Endothelial cell of umbilical vein (primary cell): ENCODE measurements at regions of chr21 and their contacts with region 1.

Region 1: DNA sequence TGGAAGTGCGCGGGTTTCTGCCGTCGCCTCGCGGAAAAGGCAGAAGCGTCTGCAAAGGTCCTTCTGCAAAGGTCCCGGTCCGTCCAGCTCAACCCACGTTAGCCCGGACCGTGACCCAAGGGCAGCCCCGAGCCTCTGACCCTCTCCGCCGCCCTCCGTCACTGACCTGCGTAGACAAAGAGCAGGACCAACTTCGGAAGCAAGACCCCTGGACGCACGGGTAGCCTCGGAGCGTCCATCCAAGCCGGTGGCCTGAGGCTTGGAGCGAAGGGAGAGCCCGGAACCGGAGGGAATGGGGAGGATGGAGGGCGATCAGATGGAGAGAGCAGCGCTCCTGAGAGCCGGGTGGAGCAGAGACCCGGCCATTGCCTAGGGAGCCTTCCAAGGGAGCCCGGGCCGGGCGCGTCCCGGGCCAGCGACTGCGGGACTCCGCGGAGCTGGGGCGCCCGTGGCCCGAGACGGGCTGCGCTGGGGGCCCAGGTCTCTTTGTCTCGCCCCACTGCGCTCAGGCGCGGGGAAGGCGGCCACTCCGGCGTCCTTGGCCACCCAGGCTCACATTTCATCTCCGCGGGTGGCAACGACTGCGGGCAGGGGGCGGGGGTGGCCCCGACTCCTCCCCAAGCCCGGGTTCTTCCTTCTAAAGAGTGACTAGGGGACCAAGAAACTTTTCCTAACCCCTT is at the start of gene CYYR1:
- DNase-seq: peak; percentile 62
- H3K4me3 ChIP-seq: peak within 1 kb of the TSS; percentile 72 to 83 (median 74)
- H3K27ac ChIP-seq: peak within 1 kb of the TSS; percentile 42
- H3K4me1 ChIP-seq: peaks cover 29% of the 10 kb centered on the region
- H3K27me3 ChIP-seq: no peaks in the 10 kb centered on the region
- CTCF ChIP-seq: no peak
- POLR2A ChIP-seq: no peak
- total RNA-seq, gene CYYR1: 23.8 and 25.7 TPM in 2 replicates

Region 2: DNA sequence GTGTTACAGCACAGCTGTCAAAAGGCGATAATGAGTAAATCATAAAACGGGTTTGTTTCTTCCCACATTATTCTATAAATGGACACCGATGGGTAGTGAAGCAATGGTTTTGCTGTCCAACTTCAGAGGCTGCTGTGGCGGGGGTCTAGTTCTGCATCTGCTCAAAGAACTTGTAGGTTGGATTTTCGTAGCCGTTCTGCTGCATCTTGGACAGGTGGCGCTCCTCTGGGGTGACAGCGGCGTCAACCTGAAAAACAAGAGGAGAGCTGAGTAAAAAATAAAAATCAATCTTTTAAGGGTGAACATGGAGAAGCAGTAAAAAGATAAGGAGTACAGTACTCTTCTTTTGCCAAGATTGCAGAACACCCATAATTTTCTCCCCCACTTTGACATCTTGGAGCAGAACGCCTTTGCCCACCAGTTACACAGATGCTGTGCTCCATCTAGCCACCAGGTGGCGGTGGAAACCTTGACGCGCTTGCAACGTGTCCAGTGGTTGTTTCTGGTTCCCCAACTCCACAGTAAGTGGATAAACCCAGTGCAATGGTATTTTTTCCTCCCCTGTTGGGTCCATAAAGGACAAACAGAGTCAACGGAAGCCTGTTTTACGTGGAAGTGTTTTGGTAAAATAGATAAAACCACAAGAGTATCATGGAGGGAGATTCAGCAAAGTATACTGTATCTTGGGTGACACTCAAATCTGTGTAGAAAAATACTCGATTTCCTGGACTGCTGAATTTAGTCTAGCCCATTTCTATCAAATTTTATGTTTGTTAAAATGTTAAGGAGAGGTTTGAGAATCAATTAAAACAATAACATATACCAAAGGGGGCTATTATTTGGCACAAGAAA is 691.1 kb before region 1 on chr21:
- CTCF ChIA-PET with region 1: no interaction called
- POLR2A ChIA-PET with region 1: no interaction called
- dilution Hi-C with region 1: no loop called
- intact Hi-C with region 1: loop called (anchors 5 kb)
- DNase-seq: peak; percentile 65
- H3K4me3 ChIP-seq: no peak overlapping the region
- H3K27ac ChIP-seq: no peak overlapping the region
- H3K4me1 ChIP-seq: peaks cover 23% of the 10 kb centered on the region
- H3K27me3 ChIP-seq: no peaks in the 10 kb centered on the region
- CTCF ChIP-seq: peak; percentile 87 to 89
- POLR2A ChIP-seq: no peak

Region 3: GRCh38 chr21:26546446-26547097 is 26.3 kb before region 1 on chr21:
- CTCF ChIA-PET with region 1: interaction called, 3 read pairs
- POLR2A ChIA-PET with region 1: interaction called, 3 read pairs
- dilution Hi-C with region 1: no loop called
- intact Hi-C with region 1: loop called (anchors 1 kb)
- DNase-seq: peak; percentile 83
- H3K4me3 ChIP-seq: peak overlapping the region in 1 of 3 experiments; percentile 15
- H3K27ac ChIP-seq: peak overlapping the region; percentile 63
- H3K4me1 ChIP-seq: peaks cover 16% of the 10 kb centered on the region
- H3K27me3 ChIP-seq: no peaks in the 10 kb centered on the region
- CTCF ChIP-seq: no peak
- POLR2A ChIP-seq: no peak

Region 4: DNA sequence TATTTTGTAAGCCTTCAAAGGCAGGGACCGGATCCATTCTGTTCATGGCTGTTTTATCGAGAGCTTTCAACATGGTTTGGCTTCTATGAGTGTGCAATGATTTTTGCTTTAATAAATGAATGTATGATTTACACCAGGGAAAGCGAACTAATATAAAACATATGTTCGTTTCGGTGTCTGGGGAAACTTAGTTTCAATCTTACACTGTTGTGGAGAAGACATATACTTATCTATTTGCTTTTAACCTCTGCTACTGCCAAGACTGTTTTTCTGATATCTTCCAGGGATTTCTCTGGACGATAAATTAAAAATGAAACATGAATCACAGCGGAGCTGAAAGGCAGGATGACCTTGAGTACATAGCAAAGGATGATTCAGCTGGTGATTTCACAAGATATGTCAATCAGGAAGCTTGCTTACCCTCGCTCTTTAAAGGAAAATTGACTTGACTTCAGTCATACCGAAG is 14.9 kb after region 1 on chr21:
- CTCF ChIA-PET with region 1: interaction called, 12 read pairs
- POLR2A ChIA-PET with region 1: no interaction called
- dilution Hi-C with region 1: no loop called
- intact Hi-C with region 1: no loop called
- DNase-seq: peak; percentile 86
- H3K4me3 ChIP-seq: no peak overlapping the region
- H3K27ac ChIP-seq: no peak overlapping the region
- H3K4me1 ChIP-seq: peaks cover 12% of the 10 kb centered on the region
- H3K27me3 ChIP-seq: no peaks in the 10 kb centered on the region
- CTCF ChIP-seq: no peak
- POLR2A ChIP-seq: no peak

Region 5: DNA sequence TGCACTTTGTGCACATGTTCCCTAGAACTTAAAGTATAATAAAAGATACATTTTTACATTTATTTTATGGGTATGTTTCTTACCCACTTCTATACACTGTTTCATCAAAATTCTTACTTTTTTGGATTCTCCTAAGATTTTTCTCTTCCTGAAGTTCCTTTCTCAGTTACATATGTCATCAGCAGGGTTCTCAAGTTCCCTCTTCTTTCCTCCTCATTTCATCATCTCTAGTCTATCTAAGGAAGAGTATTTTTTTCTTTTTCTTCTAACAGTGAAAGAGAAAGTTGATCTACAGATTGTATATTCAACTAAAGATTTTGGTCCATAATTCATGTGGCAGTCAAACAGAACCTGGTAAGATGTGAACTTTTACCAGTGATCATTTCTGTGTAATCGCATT is 41.4 kb after region 1 on chr21:
- CTCF ChIA-PET with region 1: no interaction called
- POLR2A ChIA-PET with region 1: no interaction called
- dilution Hi-C with region 1: no loop called
- intact Hi-C with region 1: no loop called
- DNase-seq: no peak
- H3K4me3 ChIP-seq: no peak overlapping the region
- H3K27ac ChIP-seq: no peak overlapping the region
- H3K4me1 ChIP-seq: no peaks in the 10 kb centered on the region
- H3K27me3 ChIP-seq: peaks cover 0 to 2% of the 10 kb centered on the region in 2 experiments
- CTCF ChIP-seq: no peak
- POLR2A ChIP-seq: no peak

Region 6: DNA sequence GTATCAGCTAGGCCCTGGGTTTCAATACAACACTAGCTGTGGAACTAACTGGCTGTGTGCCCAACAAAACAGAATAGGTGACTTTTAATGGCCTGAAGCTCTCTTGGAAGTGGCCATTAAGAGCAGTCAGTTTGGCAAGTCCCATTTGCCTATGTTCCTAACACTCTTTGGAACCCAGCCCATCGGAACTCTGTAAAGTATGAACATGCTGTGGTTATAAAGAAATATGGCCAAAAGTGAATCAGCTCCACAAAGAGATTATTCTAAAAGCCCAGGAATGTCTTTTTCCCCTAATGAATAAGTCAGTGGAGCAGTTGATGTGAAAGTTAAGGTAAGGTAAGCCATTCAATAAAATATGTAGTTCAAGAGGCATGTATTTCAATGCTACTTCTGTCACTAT is 617.8 kb after region 1 on chr21:
- CTCF ChIA-PET with region 1: no interaction called
- POLR2A ChIA-PET with region 1: no interaction called
- dilution Hi-C with region 1: no loop called
- intact Hi-C with region 1: no loop called
- DNase-seq: no peak
- H3K4me3 ChIP-seq: no peak overlapping the region
- H3K27ac ChIP-seq: no peak overlapping the region
- H3K4me1 ChIP-seq: no peaks in the 10 kb centered on the region
- H3K27me3 ChIP-seq: no peaks in the 10 kb centered on the region
- CTCF ChIP-seq: no peak
- POLR2A ChIP-seq: no peak